ENCODE measurements at regions of chr9 and their contacts with region 1.

Region 1: DNA sequence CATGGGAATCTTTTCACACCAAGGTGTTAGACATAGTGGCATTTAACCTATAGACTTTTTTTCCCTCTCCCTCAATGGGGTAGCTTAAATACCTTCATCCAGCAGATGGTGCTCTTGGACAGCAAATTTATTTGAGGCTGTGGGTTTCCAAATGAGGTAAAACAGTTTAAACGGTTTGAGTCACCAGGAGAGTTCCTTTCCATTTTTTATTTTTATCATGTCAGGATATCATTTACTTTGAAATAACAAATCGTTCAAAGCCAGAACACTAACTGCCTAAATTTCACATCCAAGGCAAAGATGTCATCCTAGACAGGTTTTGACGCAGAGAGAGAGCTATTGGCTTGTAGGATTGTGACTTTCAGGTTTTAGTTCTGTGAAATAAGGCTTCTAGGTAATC is 69.7 kb downstream of the KDM4C start:
- DNase-seq: peak; percentile 20
- H3K4me3 ChIP-seq: no peak overlapping the region
- H3K27ac ChIP-seq: no peak overlapping the region
- H3K4me1 ChIP-seq: no peaks in the 10 kb centered on the region
- H3K27me3 ChIP-seq: no peaks in the 10 kb centered on the region
- CTCF ChIP-seq: peak; percentile 31 to 57

Region 2: DNA sequence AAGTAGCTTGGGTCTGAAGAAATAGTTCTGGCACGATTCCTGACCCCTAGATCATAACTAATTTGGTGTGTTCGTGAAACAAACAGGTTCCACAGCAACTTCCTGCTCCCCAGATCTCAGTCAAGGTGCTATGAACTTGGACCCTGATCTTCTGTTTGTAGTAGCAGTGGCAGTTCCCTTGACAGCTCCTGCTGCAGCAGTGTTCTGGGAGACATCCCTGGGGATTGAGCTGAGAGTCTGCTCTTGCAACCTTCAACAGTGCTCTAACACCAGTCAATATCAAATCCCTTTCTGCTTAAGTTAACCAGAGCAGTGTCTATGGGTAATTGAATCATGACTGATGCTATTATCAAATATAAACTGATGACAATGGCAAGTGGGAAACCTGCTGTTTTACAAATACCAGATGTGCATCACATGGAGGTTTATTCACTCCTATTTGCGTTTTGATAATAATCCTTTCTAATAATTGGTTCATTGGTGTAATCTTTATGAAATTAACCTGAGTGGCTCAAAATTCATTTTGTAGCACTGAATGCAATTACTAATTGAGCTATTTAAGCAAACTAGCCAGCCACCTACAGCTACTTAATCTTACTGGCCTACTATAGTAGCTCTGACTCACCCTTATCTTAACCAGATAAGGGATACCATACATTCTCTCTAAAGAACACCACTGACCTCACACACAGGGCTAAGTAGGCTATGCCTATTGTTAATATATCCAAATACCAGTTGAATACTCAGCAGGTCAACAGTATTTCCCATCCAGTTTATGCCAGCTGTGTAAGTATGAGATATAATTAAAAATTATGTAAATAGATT is 47.8 kb before region 1 on chr9:
- CTCF ChIA-PET with region 1: interaction called, 21 read pairs
- dilution Hi-C with region 1: no loop called
- in situ Hi-C with region 1: no loop called
- intact Hi-C with region 1: no loop called
- DNase-seq: no peak
- H3K4me3 ChIP-seq: no peak overlapping the region
- H3K27ac ChIP-seq: no peak overlapping the region
- H3K4me1 ChIP-seq: peaks cover 4% of the 10 kb centered on the region
- H3K27me3 ChIP-seq: no peaks in the 10 kb centered on the region
- CTCF ChIP-seq: no peak

Region 3: DNA sequence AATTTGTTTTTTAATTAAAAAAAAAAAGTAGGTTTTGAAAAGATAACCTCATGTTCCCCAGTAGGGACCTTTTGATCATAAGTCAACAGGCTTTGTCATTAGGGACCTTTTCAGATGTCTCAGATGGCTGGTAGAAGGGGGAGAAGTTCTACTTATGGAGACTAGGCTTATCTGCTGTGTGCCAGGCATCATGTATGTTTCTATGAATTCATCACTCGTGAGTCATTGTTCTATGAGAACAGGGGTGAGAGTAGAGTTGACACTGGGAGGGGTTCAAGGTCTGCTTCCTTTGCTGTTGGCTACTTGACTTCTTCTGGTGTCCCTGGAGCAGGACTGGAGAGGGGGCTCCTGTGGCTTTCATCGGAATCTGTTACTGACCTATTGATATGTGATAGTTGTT is 69.1 kb after region 1 on chr9:
- CTCF ChIA-PET with region 1: no interaction called
- dilution Hi-C with region 1: no loop called
- in situ Hi-C with region 1: no loop called
- intact Hi-C with region 1: loop called (anchors 2 kb)
- DNase-seq: peak; percentile 41
- H3K4me3 ChIP-seq: no peak overlapping the region
- H3K27ac ChIP-seq: no peak overlapping the region
- H3K4me1 ChIP-seq: peaks cover 15% of the 10 kb centered on the region
- H3K27me3 ChIP-seq: no peaks in the 10 kb centered on the region
- CTCF ChIP-seq: no peak